Breast epithelium (tissue), 4 donors: ENCODE measurements at regions of chr1 and their contacts with region 1.

Region 1: DNA sequence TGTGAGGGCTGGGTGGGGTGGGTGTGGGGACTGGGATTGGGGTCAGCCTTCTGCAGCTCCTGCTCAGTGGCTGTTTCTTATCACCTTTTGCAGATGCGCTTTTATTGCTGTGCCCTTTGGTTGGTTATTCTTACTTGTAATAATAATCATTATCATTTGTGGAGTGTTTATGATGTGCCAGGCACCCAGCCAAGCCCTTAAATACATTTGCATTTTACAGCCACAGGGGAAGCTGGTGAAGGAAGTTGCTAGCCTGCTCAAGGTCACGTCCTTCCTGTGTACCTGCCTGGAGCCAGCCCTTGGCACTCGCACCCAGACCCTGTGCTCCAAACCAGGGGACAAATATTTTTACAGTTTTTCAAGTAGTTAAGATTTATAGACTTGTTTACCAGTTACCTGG is 144.0 kb downstream of the PGBD5 start:
- DNase-seq: no peak
- H3K4me3 ChIP-seq: no peak overlapping the region
- H3K27ac ChIP-seq: no peak overlapping the region
- H3K4me1 ChIP-seq: no peaks in the 10 kb centered on the region
- H3K27me3 ChIP-seq: no peaks in the 10 kb centered on the region
- CTCF ChIP-seq: no peak
- POLR2A ChIP-seq: no peak

Region 2: GRCh38 chr1:229636042-229636441 is 646.1 kb before region 1 on chr1:
- intact Hi-C with region 1: loop called (anchors 10 kb)
- DNase-seq: no peak
- H3K4me3 ChIP-seq: no peak overlapping the region
- H3K27ac ChIP-seq: no peak overlapping the region
- H3K4me1 ChIP-seq: no peaks in the 10 kb centered on the region
- H3K27me3 ChIP-seq: no peaks in the 10 kb centered on the region
- CTCF ChIP-seq: no peak
- POLR2A ChIP-seq: no peak

Region 3: DNA sequence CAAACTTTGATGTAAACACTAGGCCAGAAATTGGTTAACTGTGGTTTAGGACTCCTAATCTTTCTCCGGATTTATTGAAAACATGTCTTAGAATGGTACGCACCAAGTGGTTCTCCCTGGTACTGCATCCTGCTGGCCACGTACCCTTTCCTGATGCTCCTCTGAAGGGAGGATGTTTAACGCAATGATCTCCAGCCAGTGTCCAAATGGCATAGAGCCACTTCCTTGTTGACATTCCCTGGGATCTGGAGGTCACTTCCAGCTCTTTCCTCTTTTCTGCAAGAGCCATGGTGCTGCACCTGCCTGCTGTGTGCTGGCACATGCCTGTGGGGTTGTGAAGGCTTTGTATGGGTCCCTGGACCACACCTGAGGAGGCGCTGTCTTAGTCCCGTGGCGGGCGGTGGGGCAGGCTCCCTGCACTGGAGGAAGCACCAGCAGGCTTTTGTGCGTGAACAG is 161.2 kb before region 1 on chr1:
- intact Hi-C with region 1: no loop called
- DNase-seq: no peak
- H3K4me3 ChIP-seq: no peak overlapping the region
- H3K27ac ChIP-seq: no peak overlapping the region
- H3K4me1 ChIP-seq: no peaks in the 10 kb centered on the region
- H3K27me3 ChIP-seq: no peaks in the 10 kb centered on the region
- CTCF ChIP-seq: peak in 1 of 3 donors; percentile 43
- POLR2A ChIP-seq: no peak

Region 4: GRCh38 chr1:230317823-230318819 is 36.0 kb after region 1 on chr1:
- intact Hi-C with region 1: no loop called
- DNase-seq: peak in 1 of 2 donors; percentile 36
- H3K4me3 ChIP-seq: no peak overlapping the region
- H3K27ac ChIP-seq: no peak overlapping the region
- H3K4me1 ChIP-seq: no peaks in the 10 kb centered on the region
- H3K27me3 ChIP-seq: peaks cover 0 to 6% of the 10 kb centered on the region in 2 donors
- CTCF ChIP-seq: no peak
- POLR2A ChIP-seq: no peak

Region 5: DNA sequence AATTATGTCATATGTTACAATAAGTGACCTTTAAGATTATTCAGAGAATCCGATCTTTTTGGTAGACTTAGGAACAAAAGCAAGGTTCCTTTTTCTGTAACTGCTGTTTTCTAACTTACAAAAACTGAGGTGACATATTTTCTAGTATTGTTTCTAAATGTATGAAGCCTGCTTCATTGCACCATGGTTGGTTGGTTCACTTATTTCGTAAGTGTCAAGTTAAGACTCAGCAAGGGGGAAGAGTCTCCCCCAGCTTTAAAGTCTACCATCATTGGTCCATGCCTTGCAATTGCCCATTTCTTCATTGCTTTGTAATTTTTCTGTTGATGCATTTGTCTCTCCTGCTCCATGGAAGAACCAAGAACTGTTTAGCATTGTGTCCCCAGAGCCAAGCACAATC is 1481.3 kb after region 1 on chr1:
- intact Hi-C with region 1: no loop called
- DNase-seq: no peak
- H3K4me3 ChIP-seq: no peak overlapping the region
- H3K27ac ChIP-seq: no peak overlapping the region
- H3K4me1 ChIP-seq: no peaks in the 10 kb centered on the region
- H3K27me3 ChIP-seq: no peaks in the 10 kb centered on the region
- CTCF ChIP-seq: no peak
- POLR2A ChIP-seq: no peak